Activated CD4-positive, alpha-beta memory T cell treated with anti-CD3 and anti-CD28 coated beads for 36 hours (primary cell): ENCODE measurements at regions of chr17 and their contacts with region 1.

Region 1: DNA sequence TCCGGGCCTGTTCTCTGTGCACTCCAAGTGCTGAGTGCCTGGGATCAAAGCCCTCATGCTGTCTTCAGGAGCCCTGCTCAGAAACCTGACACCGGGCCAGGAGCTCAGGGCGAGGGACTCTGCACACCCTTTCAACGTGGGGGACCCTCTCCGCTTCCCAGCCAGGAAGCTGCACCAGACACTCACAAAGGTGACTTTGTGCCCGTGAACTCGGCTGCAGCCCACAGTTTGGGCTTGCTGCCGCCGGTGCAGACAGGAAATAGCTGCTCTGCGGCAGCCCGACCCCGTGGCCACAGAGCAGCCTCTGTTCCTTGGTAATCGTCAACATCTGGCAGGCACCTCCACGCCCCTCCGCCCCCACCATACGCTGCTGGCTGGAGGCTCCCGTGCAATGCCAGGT is 93.4 kb upstream of the METRNL start:
- DNase-seq: peak; percentile 74
- H3K4me3 Mint-ChIP-seq: peak overlapping the region; percentile 46
- H3K27ac Mint-ChIP-seq: no peak overlapping the region
- H3K4me1 Mint-ChIP-seq: peaks cover 20% of the 10 kb centered on the region
- H3K27me3 Mint-ChIP-seq: no peaks in the 10 kb centered on the region

Region 2: DNA sequence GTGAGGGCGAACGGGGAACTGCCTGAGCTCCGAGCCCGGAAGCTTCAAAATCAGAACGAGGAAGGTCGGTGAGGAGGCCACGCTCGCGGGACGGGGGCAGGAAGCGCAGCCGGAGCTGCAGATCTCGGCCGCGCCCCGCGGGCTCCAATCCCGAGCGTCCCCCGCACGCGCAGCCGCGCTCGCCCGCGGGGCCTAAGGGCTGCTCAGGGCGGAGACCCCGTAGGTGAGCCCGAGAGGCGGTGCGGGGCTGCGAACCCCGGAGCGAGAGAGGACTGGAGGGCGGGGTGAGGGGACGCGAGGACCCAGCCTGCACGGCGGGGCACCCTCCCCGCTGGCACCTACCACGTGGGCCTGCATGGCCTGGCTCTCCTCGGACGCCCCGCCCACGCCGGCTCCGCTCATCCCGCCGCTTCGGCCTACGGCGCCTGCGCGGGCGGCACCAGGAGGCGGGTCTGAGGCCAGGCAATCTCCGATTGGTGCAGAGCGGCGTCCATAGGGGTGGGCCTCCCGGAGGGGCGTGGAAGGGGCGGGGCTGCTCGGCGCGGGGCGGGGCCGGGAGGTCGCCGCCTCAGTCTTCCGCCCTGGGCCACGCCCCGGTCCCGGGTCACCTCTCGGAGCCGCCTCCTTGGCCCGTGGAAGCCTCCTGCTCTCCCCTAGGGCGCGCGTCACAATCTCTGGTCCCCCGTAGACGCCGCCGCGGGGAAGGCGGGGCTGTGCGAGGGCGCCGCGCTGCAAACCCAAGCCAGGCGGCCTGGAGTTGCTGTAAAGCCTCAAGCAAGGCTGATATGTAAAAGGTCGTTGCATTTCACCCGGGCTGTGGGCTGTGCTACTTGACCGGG is 65.6 kb after region 1 on chr17:
- CTCF ChIA-PET with region 1: no interaction called
- POLR2A ChIA-PET with region 1: no interaction called
- intact Hi-C with region 1: loop called (anchors 5 kb)
- DNase-seq: peak; percentile 99
- H3K4me3 Mint-ChIP-seq: peak overlapping the region; percentile 86
- H3K27ac Mint-ChIP-seq: peak overlapping the region; percentile 88
- H3K4me1 Mint-ChIP-seq: peaks cover 40% of the 10 kb centered on the region
- H3K27me3 Mint-ChIP-seq: no peaks in the 10 kb centered on the region

Region 3: DNA sequence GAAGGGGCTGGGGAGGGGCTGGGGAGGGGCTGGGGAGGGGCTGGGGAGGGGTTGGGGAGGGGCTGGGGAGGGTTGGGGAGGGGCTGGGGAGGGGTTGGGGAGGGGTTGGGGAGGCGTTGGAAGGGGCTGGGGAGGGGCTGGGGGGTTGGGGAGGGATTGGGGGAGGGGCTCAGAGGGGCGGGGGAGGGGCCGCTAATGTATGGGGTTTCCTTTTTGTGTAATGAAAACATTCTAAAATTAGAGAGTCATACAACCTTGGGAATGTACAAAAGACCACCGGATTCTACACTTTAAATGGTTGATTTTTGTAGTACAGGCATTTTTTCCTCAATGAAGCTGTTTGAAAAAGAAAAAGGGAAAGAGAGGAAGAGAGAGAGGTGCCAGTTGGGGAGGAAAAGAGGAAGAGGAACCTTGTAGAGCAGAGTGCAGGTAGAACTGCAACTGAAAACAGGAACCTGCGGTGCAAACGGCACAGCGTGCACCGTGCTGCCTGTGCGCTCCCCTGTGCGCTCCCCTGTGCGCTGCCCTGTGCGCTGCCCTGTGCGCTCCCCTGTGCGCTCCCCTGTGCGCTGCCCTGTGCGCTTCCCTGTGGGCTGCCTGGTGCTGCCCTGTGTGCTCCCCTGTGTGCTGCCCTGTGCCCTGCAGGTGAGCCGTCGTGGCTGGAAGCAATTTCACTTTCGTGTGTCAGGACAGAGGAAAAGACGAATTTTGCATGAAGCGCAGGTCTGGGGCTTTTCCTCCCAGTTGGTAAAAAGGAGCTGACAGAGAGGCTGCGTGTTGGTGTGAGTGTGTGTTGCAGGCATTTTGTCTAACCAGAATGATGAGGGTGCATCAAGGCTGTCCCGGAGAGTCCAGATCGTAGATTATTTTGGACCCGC is 134.3 kb after region 1 on chr17:
- CTCF ChIA-PET with region 1: no interaction called
- POLR2A ChIA-PET with region 1: no interaction called
- intact Hi-C with region 1: no loop called
- DNase-seq: peak; percentile 30
- H3K4me3 Mint-ChIP-seq: no peak overlapping the region
- H3K27ac Mint-ChIP-seq: no peak overlapping the region
- H3K4me1 Mint-ChIP-seq: peaks cover 17% of the 10 kb centered on the region
- H3K27me3 Mint-ChIP-seq: peaks cover 23% of the 10 kb centered on the region

Region 4: GRCh38 chr17:83171661-83172060 is 185.7 kb after region 1 on chr17:
- CTCF ChIA-PET with region 1: no interaction called
- POLR2A ChIA-PET with region 1: no interaction called
- intact Hi-C with region 1: no loop called
- DNase-seq: peak; percentile 5
- H3K4me3 Mint-ChIP-seq: no peak overlapping the region
- H3K27ac Mint-ChIP-seq: no peak overlapping the region
- H3K4me1 Mint-ChIP-seq: no peaks in the 10 kb centered on the region
- H3K27me3 Mint-ChIP-seq: peaks cover 19% of the 10 kb centered on the region